Ascending aorta (tissue), 2 donors: ENCODE measurements at regions of chr1 and their contacts with region 1.

Region 1: DNA sequence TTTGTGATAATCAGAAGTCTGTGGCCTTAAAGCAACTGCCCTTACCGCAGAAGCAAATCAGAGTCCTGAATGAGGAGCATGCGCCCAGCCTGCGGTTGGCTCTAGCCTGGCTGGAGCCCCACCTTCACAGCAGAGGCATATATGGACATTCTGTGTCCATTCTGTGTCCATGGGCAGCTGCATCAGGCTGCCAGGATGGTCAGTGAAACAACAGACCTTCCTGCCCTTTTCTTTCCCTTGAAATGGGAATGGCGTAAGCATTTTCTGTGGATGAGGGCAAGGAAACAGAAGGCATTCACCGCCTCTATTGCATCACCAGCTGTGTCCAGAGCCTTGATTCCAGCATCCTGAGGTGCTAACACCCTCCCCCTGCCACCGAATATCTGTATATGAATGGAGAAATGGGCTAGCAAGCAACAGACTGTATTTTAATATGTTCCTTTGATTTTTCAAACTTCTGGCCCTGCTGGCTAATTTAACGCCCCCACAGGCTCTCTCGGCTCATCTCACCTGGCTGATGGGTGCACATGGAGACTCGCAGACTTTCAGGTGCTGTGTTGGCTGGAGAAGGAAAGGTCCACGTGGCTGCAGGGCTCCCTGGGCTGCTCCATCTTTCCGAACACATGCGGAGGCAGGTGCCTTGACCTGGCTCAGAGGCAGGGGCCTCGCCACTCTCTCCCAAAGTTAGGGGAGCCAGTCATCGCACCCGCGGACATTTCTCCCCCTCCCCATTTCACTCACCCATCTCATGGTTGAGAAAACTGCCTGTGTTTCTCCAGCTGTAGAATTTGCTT is 159.2 kb downstream of the GALNT2 start:
- DNase-seq: no peak
- H3K4me3 ChIP-seq: no peak overlapping the region
- H3K27ac ChIP-seq: peak overlapping the region; percentile 93 to 95
- H3K4me1 ChIP-seq: peaks cover 15 to 52% of the 10 kb centered on the region in 2 donors
- H3K27me3 ChIP-seq: no peaks in the 10 kb centered on the region
- CTCF ChIP-seq: no peak

Region 2: GRCh38 chr1:230251644-230252191 is 25.5 kb after region 1 on chr1:
- intact Hi-C with region 1: loop called (anchors 2 kb)
- DNase-seq: peak in 1 of 2 donors; percentile 38
- H3K4me3 ChIP-seq: no peak overlapping the region
- H3K27ac ChIP-seq: peak overlapping the region; percentile 35 to 86
- H3K4me1 ChIP-seq: peaks cover 14 to 44% of the 10 kb centered on the region in 2 donors
- H3K27me3 ChIP-seq: no peaks in the 10 kb centered on the region
- CTCF ChIP-seq: no peak

Region 3: DNA sequence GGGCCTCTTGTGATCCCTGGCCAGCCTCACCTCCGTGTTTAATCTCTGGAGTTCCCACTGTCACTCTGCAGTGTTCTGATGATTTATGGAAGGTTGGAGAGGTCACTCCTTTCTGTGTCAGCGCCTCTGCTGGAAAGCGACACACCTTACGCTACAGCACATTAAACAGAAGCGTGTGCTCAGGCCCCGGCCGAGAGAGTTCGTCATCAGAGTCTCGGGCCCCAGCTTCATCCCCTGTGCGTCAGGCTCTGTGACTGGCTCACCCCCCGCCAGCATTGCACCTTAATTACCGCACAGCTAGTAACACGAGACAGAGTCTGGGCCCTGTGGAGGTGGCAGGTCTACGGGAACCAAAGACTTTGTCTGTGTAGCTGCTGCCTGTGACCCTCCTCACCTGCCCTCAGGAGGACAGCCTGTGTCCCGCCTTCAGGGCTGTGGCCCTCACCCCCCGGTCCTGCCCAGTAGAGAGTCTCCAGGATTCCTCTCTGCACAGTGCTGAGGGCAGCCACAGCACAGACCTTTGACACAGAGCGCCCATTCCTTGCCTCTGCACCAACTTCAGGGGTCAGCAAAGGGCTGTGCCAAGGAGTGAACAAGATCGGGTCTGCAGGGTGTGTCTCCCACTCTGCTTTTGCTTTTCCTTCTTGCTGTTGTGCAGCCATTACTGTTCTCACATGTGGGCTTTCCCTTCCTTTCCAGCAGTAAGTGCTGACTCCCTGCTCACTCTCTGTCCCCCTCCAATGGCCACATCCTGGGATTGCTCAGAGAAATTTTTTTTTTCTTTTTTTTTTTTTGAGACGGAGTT is 42.4 kb after region 1 on chr1:
- intact Hi-C with region 1: loop called (anchors 2 kb)
- DNase-seq: peak in 1 of 2 donors; percentile 66
- H3K4me3 ChIP-seq: no peak overlapping the region
- H3K27ac ChIP-seq: peak overlapping the region; percentile 81 to 83
- H3K4me1 ChIP-seq: peaks cover 5 to 41% of the 10 kb centered on the region in 2 donors
- H3K27me3 ChIP-seq: no peaks in the 10 kb centered on the region
- CTCF ChIP-seq: peak in 2 of 3 experiments; percentile 63 to 66